HEK293 (cell line): ENCODE measurements at regions of chr11 and their contacts with region 1.

Region 1: GRCh38 chr11:33736148-33736809 is at the start of gene CD59:
- H3K4me3 ChIP-seq: peak within 1 kb of the TSS; percentile 86
- H3K27ac ChIP-seq: peak within 1 kb of the TSS; percentile 54; the same call in 1 of the 2 replicates
- H3K4me1 ChIP-seq: no peaks in the 10 kb centered on the region
- CTCF ChIP-seq: no peak

Region 2: GRCh38 chr11:33700425-33701271 is 35.6 kb before region 1 on chr11 and contains the start of gene C11orf91:
- CTCF ChIA-PET with region 1: interaction called, 4 read pairs
- POLR2A ChIA-PET with region 1: interaction called, 19 read pairs
- H3K4me3 ChIP-seq: peak within 1 kb of the TSS; percentile 62
- H3K27ac ChIP-seq: no peak within 1 kb of the TSS
- H3K4me1 ChIP-seq: no peaks in the 10 kb centered on the region
- CTCF ChIP-seq: no peak

Region 3: GRCh38 chr11:33723238-33723887 is 12.9 kb before region 1 on chr11:
- CTCF ChIA-PET with region 1: interaction called, 4 read pairs
- POLR2A ChIA-PET with region 1: interaction called, 15 read pairs
- H3K4me3 ChIP-seq: no peak overlapping the region
- H3K27ac ChIP-seq: no peak overlapping the region
- H3K4me1 ChIP-seq: peaks cover 4% of the 10 kb centered on the region
- CTCF ChIP-seq: no peak